Posterior vena cava (tissue), 2 donors: ENCODE measurements at regions of chr9 and their contacts with region 1.

Region 1: DNA sequence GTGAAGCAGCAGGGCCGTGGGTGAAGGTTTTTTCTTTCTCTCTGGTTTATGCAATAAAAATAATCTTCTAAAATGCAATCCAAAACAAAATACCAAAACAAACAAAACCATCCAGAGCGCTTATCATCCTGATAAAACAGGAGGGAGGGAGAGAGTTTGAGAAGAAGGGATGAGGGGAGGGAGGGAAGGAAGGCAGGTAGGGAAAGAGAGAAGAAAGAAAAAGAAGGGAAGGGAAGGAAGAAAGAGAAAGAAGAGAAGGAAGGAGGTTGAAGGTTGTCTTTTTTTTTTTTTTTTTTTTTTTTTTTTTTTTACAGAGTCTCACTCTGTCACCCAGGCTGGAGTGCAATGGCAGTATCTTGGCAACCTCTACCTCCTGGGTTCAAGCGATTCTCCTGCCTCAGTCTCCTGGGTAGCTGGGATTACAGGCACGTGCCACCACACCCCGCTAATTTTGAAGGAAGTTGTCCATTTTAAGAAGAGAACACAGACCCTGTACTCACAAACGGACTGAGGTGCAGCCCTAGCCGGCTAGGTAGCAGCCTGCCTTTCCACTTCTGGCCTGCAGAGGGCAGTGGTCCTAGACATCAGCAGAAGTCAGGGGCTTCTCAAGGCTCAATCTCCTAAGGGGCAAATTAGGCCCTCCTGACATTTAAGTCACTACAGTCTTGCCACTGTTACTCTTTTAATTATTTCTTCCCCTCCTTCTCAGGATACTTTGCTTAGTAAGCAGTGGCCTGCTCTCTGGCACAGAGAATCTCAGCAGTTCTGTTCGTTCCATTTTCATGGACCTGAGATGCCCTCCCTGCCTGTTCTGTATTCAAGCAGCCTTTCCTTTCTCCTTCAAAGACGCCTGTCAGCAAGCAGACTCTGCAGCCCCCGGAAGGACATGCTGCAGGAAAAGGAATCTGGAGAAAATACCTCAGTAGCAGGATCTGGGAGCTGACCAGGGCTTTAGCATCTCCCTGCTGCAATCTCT is 76.4 kb downstream of the EPB41L4B start:
- DNase-seq: peak; percentile 86

Region 2: DNA sequence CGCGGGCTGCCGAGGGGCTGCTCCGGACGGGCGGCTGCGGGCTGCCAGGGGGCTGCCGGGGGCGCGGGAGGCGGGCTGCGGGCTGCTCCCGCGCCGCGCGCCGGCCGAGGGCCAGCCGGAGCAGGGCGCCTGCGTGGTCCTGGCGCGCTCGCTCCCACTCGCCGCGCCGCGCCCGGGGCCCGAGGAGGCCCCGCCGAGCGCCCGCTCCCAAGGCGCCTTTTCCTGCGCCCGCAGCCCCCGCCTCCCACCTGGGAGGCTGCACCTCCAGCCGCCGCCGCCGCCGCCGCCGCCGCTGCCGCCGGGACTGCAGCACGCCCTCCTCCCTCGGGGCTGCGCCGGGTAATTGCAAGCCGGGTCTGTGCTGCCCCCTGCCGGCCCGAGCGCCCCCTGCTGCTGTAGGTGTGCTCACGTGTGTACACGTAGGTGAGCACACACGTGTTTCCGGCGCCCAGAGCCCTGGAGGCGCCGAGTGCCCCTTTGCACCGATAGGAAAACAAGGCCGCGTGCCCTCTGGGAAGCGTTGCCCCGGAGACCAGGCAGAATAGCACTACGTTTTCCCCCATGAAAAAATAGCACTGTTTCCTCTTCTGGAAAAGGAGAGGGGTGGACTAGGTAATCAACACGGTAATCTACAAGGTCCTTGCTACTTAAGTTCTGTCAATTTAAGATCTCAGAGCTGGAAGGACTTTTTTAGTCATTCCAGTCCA is 76.5 kb after region 1 on chr9 and contains the start of gene EPB41L4B:
- intact Hi-C with region 1: loop called in 1 of 2 experiments (anchors 1 kb)
- DNase-seq: peak; percentile 93
- total RNA-seq, gene EPB41L4B: 0.28 to 0.62 TPM

Region 3: DNA sequence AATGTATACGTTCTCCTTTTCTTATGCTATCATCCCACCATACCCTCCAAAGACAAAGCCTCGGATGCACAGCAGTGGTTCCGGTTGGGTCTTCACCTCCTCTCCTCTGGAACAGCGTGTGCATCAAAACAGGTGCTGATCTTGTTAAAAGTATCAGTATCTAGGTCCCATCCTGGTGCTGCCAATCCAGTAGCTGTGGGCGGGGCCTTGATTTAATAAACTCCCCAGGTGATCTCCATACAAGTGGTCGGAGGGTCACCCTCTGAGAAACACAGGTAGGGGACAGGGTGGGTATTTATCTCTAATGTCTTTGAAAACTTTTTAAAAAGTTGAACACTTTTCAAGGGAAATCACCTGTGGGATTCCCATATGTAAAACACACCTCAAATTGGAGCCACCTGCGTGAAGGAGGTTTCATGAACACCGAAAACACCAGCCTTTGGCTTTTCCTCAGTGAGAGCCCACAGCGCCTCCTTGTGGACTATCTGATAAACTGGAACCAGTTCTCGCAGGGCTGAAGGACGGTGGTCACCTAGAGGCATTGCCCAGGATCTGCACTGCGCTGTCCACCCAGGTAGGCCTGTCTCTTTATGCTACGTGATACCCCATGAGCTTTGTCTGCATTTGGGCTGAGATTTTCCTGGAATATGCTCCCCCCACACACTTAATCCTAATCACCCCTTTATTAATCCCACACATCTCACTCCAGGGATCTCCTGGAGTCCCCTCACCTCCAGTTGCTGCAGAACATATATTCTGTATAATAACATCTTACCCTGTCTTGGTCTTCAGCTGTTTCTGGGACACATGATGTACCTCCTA is 156.9 kb after region 1 on chr9:
- intact Hi-C with region 1: no loop called
- DNase-seq: no peak

Region 4: GRCh38 chr9:109520478-109521132 is 276.2 kb after region 1 on chr9:
- intact Hi-C with region 1: loop called in 1 of 2 experiments (anchors 10 kb)
- DNase-seq: no peak